ENCODE measurements at regions of chr5 and their contacts with region 1.

Region 1: GRCh38 chr5:149367249-149367971 is 9.6 kb downstream of the PCYOX1L start:
- DNase-seq: peak; percentile 71
- ATAC-seq: peak; percentile 65
- H3K4me3 Mint-ChIP-seq: no peak overlapping the region
- H3K27ac Mint-ChIP-seq: no peak overlapping the region
- H3K4me1 Mint-ChIP-seq: peaks cover 7% of the 10 kb centered on the region
- H3K27me3 Mint-ChIP-seq: no peaks in the 10 kb centered on the region

Region 2: GRCh38 chr5:149298842-149299404 is 68.5 kb before region 1 on chr5:
- CTCF ChIA-PET with region 1: interaction called, 13 read pairs
- POLR2A ChIA-PET with region 1: interaction called, 4 read pairs
- intact Hi-C with region 1: no loop called
- DNase-seq: no peak
- ATAC-seq: no peak
- H3K4me3 Mint-ChIP-seq: no peak overlapping the region
- H3K27ac Mint-ChIP-seq: no peak overlapping the region
- H3K4me1 Mint-ChIP-seq: peaks cover 46% of the 10 kb centered on the region
- H3K27me3 Mint-ChIP-seq: no peaks in the 10 kb centered on the region

Region 3: DNA sequence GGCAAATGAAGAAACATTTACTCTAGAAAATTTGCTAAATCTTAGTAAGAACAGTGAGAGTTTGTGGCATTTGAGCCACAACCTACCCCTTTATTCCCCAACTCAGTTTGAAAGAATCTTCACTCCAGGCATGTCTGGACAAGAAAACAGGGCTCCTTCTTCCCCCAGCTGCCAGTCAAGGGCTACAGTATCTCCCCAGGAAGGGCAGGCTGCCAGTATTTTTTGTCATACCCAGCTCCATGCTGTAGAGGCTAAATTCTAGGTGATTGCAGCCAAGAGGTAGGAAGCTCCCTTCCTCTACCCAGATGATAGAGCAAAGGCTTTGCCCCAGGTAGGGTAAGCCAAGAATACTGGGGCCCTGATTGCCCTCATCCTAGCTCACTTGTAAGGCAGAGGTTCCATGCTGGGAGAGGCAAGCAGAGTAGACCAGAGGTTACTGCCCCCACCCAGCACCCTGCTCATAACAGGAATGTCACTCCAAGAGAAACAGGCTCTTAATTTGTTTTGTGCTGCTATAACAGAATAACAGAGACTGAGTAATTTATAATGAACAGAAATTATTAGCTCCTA is 42.2 kb before region 1 on chr5:
- CTCF ChIA-PET with region 1: interaction called, 22 read pairs
- POLR2A ChIA-PET with region 1: no interaction called
- intact Hi-C with region 1: no loop called
- DNase-seq: no peak
- ATAC-seq: no peak
- H3K4me3 Mint-ChIP-seq: no peak overlapping the region
- H3K27ac Mint-ChIP-seq: no peak overlapping the region
- H3K4me1 Mint-ChIP-seq: no peaks in the 10 kb centered on the region
- H3K27me3 Mint-ChIP-seq: no peaks in the 10 kb centered on the region

Region 4: DNA sequence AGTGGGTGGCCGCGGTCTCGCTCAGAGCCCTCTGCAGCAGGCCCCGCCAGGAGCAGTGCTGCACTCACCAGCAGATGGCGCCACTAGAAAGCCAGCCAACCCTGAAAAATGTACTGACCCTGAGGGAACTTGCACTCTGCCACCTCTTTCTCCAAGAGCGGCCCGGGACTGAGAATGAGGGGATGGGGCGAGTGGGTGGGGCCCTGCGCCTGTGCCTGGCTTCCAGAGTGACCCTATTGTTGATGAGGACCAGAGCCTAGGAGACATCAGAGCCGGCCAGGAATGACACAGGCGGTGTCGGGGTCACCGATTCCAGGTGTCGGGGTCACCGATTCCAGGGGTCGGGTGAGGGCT is 14.6 kb after region 1 on chr5:
- CTCF ChIA-PET with region 1: interaction called, 26 read pairs
- POLR2A ChIA-PET with region 1: no interaction called
- intact Hi-C with region 1: no loop called
- DNase-seq: peak; percentile 87
- ATAC-seq: peak; percentile 97
- H3K4me3 Mint-ChIP-seq: no peak overlapping the region
- H3K27ac Mint-ChIP-seq: no peak overlapping the region
- H3K4me1 Mint-ChIP-seq: no peaks in the 10 kb centered on the region
- H3K27me3 Mint-ChIP-seq: no peaks in the 10 kb centered on the region

Region 5: DNA sequence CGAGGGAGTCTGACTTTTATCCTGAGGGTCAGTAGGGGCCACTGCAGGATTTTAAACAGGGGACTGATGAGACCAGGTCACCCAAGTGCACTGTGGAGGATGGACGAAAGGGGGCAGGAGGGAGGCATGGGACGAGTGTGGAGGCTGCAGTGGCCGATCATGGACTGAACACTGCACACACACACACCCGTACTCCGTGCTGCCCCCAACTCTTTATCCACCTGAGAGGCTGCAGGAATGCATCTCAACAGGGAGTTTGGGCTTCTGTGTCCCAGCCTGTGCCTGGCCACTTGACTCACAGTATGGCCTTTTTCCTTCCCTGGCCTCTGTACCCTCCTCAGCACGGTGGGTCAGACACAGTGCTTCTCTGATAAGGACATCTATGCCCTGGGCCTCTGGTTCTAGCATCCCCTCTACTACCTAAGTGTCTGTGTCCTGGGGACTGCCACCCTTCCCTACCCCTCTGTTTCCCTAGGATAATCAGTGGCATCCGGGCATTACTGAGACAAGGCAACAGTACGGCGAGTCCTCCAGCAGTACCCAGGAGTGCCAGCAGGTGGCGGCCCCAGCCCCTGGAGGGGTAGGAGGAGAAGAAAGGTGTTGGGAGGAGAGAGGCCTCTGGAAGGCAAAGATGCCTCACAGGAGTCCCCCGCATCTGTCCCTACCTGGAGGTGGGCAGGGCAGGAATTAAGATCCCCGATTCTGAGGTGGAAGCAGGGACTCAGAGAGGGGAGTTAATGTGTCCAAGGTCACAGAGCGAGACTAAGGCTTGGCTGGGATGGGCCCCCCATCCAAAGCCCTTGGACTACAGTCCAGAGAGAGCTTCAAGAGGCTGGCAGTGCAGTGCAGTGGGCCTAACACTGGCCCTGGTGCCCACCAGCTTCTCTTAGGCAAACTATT is 794.1 kb after region 1 on chr5:
- CTCF ChIA-PET with region 1: no interaction called
- POLR2A ChIA-PET with region 1: no interaction called
- intact Hi-C with region 1: no loop called
- DNase-seq: peak; percentile 88
- ATAC-seq: peak; percentile 91
- H3K4me3 Mint-ChIP-seq: no peak overlapping the region
- H3K27ac Mint-ChIP-seq: no peak overlapping the region
- H3K4me1 Mint-ChIP-seq: no peaks in the 10 kb centered on the region
- H3K27me3 Mint-ChIP-seq: peaks cover 8% of the 10 kb centered on the region